Naive thymus-derived CD4-positive, alpha-beta T cell (primary cell): ENCODE measurements at regions of chr3 and their contacts with region 1.

Region 1: DNA sequence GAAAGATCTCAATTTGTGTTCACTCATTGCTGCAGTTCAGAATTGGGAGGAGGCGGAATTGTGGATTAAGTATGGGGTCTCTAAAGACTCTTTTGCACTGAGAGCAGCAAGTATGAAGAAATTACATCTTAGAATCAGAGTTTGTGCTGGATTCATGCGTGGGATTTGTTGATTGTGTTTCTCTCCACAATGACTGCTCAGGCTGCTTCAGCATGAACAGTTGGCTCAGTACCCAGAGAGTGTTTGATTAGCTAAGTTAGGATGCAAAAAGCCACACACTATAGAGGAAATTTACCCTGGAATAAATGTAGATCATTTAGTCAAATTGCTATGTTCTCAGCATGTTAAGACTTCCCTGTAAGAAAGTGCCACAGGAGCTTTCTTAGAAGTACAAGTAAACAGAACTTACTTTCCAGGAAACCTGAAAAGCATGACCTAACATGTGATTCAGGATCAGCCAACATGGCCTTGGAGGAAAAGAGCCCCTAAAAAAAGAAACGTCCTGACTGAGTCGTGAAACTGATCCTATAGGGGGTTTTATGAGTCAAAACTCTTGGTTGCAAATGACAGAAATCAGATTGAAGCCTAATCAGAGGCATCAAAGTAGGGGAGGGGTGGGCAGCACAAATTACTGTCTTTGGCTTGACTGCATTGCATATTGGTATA is 32.6 kb downstream of the HHLA2 start:
- DNase-seq: no peak
- ATAC-seq: no peak
- H3K4me3 ChIP-seq: no peak overlapping the region
- H3K4me3 Mint-ChIP-seq: peak overlapping the region in 1 of 10 donors; percentile 61
- H3K27ac ChIP-seq: no peak overlapping the region
- H3K27ac Mint-ChIP-seq: peak overlapping the region in 2 of 9 donors; percentile 34 to 76
- H3K4me1 ChIP-seq: peaks cover 0 to 6% of the 10 kb centered on the region in 2 donors
- H3K4me1 Mint-ChIP-seq: peaks cover 5 to 50% (median 13%) of the 10 kb centered on the region in 7 donors
- H3K27me3 ChIP-seq: no peaks in the 10 kb centered on the region
- H3K27me3 Mint-ChIP-seq: no peaks in the 10 kb centered on the region

Region 2: GRCh38 chr3:108292905-108293328 is 36.0 kb before region 1 on chr3:
- CTCF ChIA-PET with region 1: no interaction called
- POLR2A ChIA-PET with region 1: no interaction called
- intact Hi-C with region 1: loop called in 1 of 2 experiments (anchors 2 kb)
- DNase-seq: peak in 5 of 9 donors; percentile 26 to 45 (median 33)
- ATAC-seq: peak; percentile 73
- H3K4me3 ChIP-seq: no peak overlapping the region
- H3K4me3 Mint-ChIP-seq: peak overlapping the region in 8 of 10 donors; percentile 0 to 78 (median 37)
- H3K27ac ChIP-seq: peak overlapping the region; percentile 22
- H3K27ac Mint-ChIP-seq: peak overlapping the region in 8 of 9 donors; percentile 7 to 86 (median 60)
- H3K4me1 ChIP-seq: peaks cover 17 to 19% of the 10 kb centered on the region in 2 donors
- H3K4me1 Mint-ChIP-seq: peaks cover 23 to 62% (median 31%) of the 10 kb centered on the region in 7 donors
- H3K27me3 ChIP-seq: no peaks in the 10 kb centered on the region
- H3K27me3 Mint-ChIP-seq: no peaks in the 10 kb centered on the region

Region 3: GRCh38 chr3:108301695-108302404 is 27.1 kb before region 1 on chr3:
- CTCF ChIA-PET with region 1: no interaction called
- POLR2A ChIA-PET with region 1: no interaction called
- intact Hi-C with region 1: loop called in 1 of 2 experiments (anchors 2 kb)
- DNase-seq: peak in 3 of 9 donors; percentile 11 to 16 (median 16)
- ATAC-seq: peak; percentile 26
- H3K4me3 ChIP-seq: peak overlapping the region; percentile 21
- H3K4me3 Mint-ChIP-seq: peak overlapping the region in 8 of 10 donors; percentile 6 to 73 (median 49)
- H3K27ac ChIP-seq: no peak overlapping the region
- H3K27ac Mint-ChIP-seq: peak overlapping the region in 3 of 9 donors; percentile 14 to 87 (median 37)
- H3K4me1 ChIP-seq: no peaks in the 10 kb centered on the region
- H3K4me1 Mint-ChIP-seq: peaks cover 17 to 60% (median 24%) of the 10 kb centered on the region in 7 donors
- H3K27me3 ChIP-seq: no peaks in the 10 kb centered on the region
- H3K27me3 Mint-ChIP-seq: no peaks in the 10 kb centered on the region